A673 (cell line): ENCODE measurements at regions of chr2 and their contacts with region 1.

Region 1: DNA sequence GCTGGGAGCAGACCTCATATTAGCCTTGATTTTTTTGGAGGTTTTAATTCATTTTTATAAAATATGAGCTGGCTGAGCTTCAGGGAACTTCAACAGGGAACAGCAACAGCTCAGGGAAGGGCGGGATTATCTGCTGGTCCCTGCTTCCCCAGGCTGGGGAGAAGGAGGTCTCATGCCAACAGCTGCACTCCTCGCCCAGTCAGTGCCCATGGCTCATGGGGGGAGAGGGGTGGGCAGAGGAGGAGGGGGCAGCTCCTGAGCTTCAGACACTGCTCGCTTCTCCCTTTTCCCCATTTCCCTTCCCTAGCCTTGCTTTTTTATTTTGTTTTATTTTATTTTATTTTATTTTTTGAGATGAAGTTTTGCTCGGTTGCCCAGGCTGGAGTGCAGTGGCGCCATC is 442 bp upstream of the OTOF start:
- DNase-seq: no peak
- H3K4me3 ChIP-seq: no peak overlapping the region
- H3K27ac ChIP-seq: no peak overlapping the region
- H3K4me1 ChIP-seq: no peaks in the 10 kb centered on the region
- H3K27me3 ChIP-seq: no peaks in the 10 kb centered on the region
- CTCF ChIP-seq: no peak

Region 2: DNA sequence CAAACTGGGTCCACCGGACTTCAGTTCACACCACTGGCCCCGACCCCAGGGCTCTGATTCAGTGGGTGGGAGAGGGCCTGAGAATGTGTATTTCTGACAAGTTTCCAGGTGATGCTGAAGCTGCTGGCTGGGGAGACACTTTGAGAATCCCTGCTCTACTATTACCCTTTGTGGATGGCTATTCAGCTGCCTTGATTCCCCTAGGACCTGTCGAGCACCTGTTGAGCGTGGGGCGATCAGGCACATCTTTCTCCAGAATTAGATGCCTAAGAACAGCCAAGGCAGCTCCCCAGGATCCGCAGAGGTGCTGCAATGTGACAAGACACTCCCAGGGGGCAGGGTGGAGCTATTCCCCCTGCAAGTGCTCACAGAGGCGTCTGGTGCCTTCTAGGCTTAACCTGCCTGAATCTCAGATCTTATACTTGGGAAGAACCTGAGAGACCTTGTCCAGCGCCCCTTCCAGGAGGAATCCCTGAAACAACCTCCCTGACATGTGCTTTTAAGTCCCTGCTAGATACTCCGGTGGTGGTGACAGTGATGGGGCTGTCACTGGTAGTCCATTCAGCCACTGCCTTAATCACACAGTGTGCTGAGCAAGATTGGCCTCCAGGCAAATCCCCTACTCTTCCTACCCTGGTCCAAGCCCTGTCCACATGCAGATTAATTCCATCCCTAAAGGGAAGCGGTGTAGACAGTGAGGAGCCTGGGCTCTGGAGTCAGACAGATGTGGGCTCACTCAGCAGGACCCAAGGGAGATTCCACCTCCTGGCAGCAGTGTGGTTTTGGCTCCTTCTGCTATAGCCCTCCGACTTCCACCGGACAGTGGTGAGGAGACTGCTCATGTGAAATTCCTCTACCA is 42.9 kb after region 1 on chr2:
- CTCF ChIA-PET with region 1: no interaction called
- POLR2A ChIA-PET with region 1: no interaction called
- intact Hi-C with region 1: no loop called
- DNase-seq: peak; percentile 43
- H3K4me3 ChIP-seq: no peak overlapping the region
- H3K27ac ChIP-seq: no peak overlapping the region
- H3K4me1 ChIP-seq: no peaks in the 10 kb centered on the region
- H3K27me3 ChIP-seq: peaks cover 27% of the 10 kb centered on the region
- CTCF ChIP-seq: peak; percentile 47

Region 3: DNA sequence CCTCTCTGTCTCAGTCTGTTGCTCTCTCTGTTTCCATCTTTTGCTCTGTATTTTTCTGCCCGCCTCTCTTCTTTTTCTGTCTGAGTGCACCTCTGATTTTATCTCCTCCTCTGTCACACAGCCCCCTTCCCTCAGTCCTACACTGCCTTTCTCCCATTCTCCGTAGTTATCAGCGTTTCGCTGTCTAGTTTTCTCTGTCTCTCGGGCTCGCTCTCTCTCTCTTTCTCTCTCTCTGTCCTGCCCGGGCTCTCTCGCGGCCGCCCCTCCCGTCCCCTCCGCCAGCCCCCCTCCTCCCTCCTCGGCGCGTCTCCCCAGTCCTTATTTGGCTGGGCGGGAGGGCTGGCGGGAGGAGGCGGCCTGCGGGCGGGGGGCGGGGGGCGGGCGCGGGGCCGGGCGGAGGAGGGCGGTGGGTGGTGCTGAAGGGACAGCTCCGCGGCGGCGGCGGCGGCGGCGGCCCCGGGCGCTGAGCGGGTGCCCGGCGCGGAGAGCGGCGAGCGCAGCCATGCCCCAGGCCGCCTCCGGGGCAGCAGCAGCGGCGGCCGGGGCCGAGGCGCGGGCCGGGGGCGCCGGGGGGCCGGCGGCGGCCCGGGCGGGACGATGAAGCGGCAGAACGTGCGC is 214.0 kb after region 1 on chr2 and contains the start of gene KCNK3:
- CTCF ChIA-PET with region 1: no interaction called
- POLR2A ChIA-PET with region 1: interaction called, 14 read pairs
- intact Hi-C with region 1: no loop called
- DNase-seq: peak; percentile 69
- H3K4me3 ChIP-seq: peak within 1 kb of the TSS; percentile 25
- H3K27ac ChIP-seq: no peak within 1 kb of the TSS
- H3K4me1 ChIP-seq: no peaks in the 10 kb centered on the region
- H3K27me3 ChIP-seq: peaks cover 52% of the 10 kb centered on the region
- CTCF ChIP-seq: no peak
- total RNA-seq, gene KCNK3: 0.13 and 0.31 TPM in 2 replicates